Heart right ventricle (tissue), 16 donors: ENCODE measurements at regions of chr6 and their contacts with region 1.

Region 1: DNA sequence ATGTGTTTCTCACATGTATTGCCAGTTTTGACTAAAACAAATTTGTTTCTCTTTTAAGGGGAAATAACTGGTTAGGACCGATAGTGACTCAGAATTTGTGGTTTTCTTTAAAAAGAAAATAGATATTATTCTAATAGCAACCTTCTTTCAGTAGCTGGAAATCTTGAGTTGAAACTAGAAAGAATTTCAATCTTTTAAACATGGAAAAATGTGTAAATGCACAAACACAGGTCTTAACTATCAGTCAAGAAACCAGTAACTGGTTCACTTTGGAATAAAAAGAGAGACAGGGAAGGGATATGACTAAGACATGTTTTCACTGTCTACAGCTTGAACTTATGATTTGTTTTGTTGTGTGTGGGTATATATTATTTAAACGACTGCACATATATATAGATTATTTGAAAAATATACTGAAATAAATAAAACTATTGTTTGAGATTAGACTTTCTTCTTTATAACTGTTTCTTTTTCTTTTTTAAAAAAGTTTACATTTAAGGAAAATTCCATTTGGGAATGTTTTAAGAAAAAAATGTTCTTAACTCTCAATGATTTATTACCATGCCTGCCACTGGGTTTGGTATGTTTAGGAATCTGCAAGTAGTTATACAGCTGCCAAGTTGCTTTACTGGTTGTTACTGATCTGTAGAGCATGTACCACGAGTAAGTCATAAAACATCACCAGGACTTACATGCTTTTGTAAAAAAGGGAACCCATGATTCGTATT is 753.3 kb upstream of the MARCKS start:
- DNase-seq: no peak
- ATAC-seq: no peak
- H3K4me3 ChIP-seq: no peak overlapping the region
- H3K27ac ChIP-seq: peak overlapping the region in 3 of 10 donors; percentile 5 to 28 (median 11)
- H3K4me1 ChIP-seq: peaks cover 0 to 19% (median 4%) of the 10 kb centered on the region in 9 donors
- H3K27me3 ChIP-seq: no peaks in the 10 kb centered on the region
- CTCF ChIP-seq: no peak

Region 2: GRCh38 chr6:113050010-113050858 is 53.6 kb before region 1 on chr6:
- intact Hi-C with region 1: no loop called
- DNase-seq: no peak
- ATAC-seq: peak in 1 of 8 donors; percentile 24
- H3K4me3 ChIP-seq: no peak overlapping the region
- H3K27ac ChIP-seq: no peak overlapping the region
- H3K4me1 ChIP-seq: peaks cover 0 to 19% (median 0%) of the 10 kb centered on the region in 9 donors
- H3K27me3 ChIP-seq: no peaks in the 10 kb centered on the region
- CTCF ChIP-seq: no peak

Region 3: DNA sequence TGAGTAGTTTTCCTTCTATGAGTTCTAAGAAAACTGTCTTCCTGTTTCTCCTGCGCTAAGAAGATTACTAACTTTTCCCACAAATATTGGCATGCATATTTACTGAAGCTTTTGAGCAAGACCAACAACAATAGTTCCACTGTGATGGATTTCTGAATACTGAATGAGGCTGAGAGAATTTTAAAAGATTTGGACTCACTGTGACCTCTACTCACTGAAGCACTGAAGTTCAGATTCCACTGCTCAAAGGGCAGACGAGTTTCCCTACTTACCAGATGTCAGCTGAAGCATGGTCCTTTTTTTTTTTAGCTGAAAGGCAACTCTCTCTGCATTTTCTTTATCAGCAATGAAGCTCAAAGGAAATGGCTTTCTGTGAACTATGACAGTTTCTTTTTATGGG is 38.2 kb before region 1 on chr6:
- intact Hi-C with region 1: loop called in 1 of 10 experiments (anchors 2 kb)
- DNase-seq: peak in 1 of 2 donors; percentile 26
- ATAC-seq: peak in 7 of 8 donors; percentile 51 to 95 (median 79)
- H3K4me3 ChIP-seq: no peak overlapping the region
- H3K27ac ChIP-seq: peak overlapping the region in 6 of 10 donors; percentile 10 to 63 (median 18)
- H3K4me1 ChIP-seq: peaks cover 0 to 32% (median 12%) of the 10 kb centered on the region in 9 donors
- H3K27me3 ChIP-seq: no peaks in the 10 kb centered on the region
- CTCF ChIP-seq: no peak